Sciatic nerve (tissue), 2 donors: ENCODE measurements at regions of chr17 and their contacts with region 1.

Region 1: DNA sequence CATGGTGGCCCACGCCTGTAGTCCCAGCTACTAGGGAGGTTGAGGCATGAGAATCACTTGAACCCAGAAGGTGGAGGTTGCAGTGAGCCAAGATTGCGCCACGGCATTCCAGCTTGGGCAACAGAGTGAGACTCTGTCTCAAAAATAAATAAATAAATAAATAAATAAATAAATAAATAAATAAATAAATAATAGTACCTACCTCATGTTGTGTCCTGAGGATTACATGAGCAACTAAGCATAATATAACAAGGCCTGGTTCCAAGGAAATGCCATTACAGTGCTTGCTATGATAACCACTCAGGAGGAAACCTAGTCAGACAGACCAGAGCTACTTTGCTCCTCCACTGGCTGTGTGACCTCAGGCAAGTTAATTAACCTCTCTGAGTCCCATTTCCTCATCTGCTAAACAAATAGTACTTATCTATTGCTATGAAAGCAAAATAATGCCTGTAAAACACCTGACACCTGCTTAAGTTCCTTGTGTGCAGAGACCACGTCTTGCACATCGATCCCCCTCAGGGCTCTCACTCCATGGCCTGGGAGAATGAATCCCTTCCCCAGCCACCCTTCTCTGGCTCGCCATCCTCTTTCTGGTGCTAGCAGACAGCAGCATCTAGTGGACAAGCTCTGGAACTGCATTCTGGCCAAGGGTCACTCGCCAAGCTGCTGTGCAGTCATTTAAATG is 7.5 kb downstream of the EPOP start:
- DNase-seq: peak; percentile 77
- ATAC-seq: peak; percentile 68

Region 2: GRCh38 chr17:38498186-38498752 is 169.0 kb before region 1 on chr17:
- intact Hi-C with region 1: loop called (anchors 10 kb)
- DNase-seq: no peak
- ATAC-seq: no peak

Region 3: DNA sequence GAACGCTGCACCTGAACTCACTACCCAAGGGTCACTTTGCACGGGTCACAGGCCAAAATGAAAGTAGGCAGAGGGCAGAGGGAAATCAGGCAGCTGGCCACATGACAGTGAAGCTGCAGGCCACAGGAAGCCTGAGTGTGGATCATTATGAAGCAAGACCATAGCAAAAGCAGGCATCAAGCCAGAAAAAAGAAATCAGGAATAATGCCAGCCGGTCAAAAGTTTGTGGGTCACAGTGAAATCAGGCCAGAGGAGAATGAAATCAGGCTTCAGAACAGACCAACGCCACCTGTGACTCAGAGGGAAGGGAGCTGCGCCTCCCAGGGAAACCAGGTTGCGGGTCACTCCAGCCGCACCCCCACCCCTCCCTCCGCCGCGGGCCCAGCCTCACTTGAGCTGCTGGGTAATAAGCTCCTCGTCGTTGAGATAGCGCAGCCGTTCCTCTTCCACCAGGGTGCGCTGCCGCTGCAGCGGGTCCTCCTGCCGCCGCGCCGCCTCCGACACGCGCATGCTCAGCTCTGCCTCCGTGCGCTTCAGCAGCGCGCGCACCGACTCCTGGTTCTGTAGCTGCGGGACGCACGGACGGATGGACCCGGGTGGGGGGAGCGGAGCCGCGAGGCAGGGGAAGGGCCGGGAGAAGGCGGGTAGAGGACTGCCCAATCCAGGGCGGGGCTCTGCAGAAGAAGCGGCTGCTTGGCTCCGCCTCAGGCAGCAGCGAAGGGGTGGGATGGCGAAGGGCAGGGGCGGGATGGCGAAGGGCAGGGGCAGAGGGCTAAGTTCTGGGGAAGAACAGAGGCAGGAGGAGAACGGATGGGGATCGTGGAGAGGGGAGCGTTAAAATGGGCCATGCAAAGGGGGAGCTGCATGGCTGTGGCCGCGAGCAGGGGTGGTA is 109.2 kb before region 1 on chr17:
- intact Hi-C with region 1: loop called (anchors 2 kb)
- DNase-seq: peak; percentile 95
- ATAC-seq: peak; percentile 90

Region 4: GRCh38 chr17:38693700-38694329 is 26.6 kb after region 1 on chr17:
- intact Hi-C with region 1: no loop called
- DNase-seq: peak; percentile 93
- ATAC-seq: peak; percentile 98